BJ (cell line): ENCODE measurements at regions of chr16 and their contacts with region 1.

Region 1: DNA sequence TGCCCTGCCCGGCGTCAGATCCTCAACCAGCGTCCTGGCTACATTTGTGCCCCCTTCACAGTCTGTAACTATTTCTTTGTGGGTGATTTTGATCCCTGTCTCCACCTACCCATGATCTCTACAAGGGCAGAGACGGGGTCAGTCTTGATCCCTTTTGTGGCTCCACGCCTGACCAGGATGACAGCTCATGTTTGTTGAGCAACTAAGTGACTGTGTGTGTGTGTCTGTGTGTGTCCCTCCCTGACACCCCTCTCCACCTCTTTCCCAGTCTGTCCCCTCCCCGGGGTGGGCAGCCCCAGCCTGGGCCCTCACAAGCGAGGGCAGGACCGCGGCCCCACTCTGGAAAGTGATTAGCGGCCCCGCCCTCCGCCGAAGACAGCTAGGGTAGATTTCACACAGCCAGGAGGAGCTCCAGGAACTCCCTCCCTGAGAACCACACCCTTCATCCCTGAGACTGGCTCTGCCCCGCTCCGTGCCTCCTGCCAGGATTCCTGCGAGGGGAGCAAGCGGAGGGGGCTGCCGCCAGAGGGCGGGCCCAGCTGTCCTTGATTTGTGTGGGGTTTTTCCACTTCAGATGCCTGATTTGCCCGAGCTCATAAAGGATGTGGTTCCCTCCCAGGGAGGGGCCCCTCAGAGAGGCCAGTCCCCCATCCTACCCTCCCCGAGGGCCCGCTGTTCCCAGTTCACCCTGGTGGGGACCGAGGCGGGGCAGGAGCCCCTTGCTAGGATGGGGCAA is 5.3 kb upstream of the HS3ST6 start:
- DNase-seq: peak; percentile 34
- H3K4me3 ChIP-seq: no peak overlapping the region
- H3K27me3 ChIP-seq: peaks cover 28% of the 10 kb centered on the region
- CTCF ChIP-seq: peak; percentile 55

Region 2: DNA sequence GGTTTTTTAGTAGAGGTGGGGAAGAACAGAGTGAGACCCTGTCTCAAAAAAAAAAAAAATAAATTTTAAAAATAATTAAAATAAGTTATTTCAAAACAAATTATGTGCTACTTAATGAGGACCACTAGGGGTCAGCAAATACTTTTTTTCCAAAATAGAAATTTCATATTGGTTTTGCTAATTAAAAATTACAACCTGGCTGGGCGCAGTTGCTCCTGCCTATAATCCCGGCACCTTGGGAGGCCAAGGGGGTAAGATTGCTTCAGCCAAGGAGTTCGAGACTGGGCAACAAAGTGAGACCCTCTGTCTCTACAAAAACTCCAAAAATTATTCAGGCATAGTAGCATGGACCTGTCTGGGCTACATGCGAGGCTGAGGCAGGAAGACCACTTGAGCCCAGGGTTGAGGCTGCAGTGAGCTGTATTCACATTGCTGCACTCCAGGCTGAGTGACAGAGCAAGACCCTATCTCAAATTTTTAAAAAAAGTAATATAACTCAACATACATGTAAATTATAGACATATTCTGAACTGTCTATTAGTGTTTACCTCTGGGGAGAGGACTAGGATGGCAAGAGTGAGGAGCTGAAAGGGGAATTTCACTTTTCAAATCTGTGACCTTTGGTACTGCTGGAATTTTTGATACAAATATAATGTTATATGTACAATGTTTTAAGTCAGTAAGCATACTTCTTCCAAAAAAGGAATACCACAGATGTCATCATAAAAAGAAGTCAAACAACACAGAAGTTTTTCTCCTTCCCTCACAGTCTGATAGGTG is 59.6 kb before region 1 on chr16:
- CTCF ChIA-PET with region 1: interaction called, 48 read pairs
- POLR2A ChIA-PET with region 1: no interaction called
- DNase-seq: no peak
- H3K4me3 ChIP-seq: no peak overlapping the region
- H3K27me3 ChIP-seq: peaks cover 5% of the 10 kb centered on the region
- CTCF ChIP-seq: peak; percentile 55

Region 3: DNA sequence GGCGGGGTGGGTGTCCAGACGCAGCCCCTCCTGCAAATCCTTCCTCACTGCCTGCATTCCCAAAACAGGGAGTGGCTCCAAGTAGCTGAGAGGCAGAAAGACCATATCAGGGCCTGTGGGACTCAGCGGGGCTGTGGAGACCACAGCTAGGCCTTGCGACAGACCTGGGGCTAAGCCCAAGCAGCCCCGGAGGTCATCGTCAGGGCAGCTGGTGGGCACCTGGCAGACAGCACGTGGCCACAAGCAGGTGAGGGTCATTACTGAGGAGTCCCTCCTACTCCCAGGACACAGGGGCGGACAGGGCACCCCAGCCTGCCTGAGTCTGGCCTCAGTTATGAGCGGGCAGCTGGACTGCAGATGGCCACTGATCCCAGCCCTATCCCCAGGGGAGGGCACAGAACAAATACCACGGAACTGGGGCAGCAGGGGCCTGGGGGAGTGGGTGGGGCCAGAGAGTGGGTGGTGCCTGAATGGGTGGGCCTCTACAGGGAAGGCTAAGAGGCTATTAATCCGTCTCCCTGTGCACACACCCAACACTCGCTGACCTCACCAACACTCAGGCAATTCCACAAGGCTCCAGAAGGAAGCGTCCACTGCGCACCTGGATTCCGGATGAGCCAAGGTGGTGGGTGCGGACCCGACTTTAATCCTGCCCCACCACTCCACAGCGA is 13.8 kb before region 1 on chr16:
- CTCF ChIA-PET with region 1: interaction called, 10 read pairs
- POLR2A ChIA-PET with region 1: no interaction called
- DNase-seq: no peak
- H3K4me3 ChIP-seq: no peak overlapping the region
- H3K27me3 ChIP-seq: peaks cover 14% of the 10 kb centered on the region
- CTCF ChIP-seq: no peak

Region 4: DNA sequence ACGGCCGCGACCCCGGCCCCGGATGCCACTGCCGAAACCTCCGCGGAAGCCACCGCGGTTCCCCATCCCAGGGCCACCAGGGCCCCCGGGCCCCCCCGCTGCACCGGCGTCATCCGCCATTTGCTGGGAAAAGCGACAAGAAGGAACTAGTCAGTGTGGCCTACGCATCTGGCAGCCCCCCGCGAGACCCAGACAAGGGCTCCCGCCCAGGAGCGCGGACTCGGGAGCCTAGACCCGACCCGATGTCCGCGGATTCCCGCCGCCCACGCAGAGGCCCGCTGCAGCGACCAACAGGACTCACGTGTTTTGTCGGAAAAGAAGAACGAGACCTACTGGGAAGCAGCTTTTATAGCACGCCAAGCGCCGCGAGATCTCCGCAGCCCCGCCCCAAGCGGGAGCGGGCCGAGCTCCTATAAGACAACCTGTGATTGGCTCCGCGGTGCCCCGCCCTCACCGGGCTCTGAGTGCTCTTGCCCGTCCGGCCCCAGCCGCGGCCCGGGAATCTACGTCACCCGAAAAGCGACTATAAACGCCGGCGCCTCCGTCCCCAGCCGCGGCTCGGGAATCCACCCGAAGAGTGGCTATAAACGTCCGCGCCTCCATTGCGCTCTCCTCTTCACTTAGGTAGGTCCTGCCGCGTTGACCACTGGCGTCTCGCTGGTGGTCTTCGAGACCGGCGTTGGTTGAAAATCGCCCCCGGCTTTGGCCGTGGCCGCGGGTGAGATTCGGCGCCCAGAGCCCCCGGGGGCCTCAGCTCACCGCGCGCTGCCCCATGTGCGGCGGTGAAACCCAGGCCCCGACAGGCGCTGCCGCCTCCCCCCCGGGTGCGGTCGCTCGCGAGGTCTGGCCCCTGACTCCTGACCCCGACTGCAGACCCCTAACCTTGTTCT is 41.3 kb after region 1 on chr16 and contains the start of gene RPS2:
- CTCF ChIA-PET with region 1: no interaction called
- POLR2A ChIA-PET with region 1: interaction called, 15 read pairs
- DNase-seq: peak; percentile 86
- H3K4me3 ChIP-seq: peak within 1 kb of the TSS; percentile 92
- H3K27me3 ChIP-seq: no peaks in the 10 kb centered on the region
- CTCF ChIP-seq: no peak; the same call in 1 of the 2 replicates
- polyA plus RNA-seq, gene RPS2: 3,098 and 4,041 TPM in 2 replicates